ENCODE measurements at regions of chr17 and their contacts with region 1.

Region 1: GRCh38 chr17:42112552-42113176 is at the start of gene DHX58:
- DNase-seq: peak; percentile 71 to 88 (median 83)
- ATAC-seq: peak; percentile 86 to 87
- H3K4me3 ChIP-seq: peak within 1 kb of the TSS; percentile 49
- H3K27ac ChIP-seq: peak within 1 kb of the TSS; percentile 84
- H3K4me1 ChIP-seq: no peaks in the 10 kb centered on the region
- H3K27me3 ChIP-seq: no peaks in the 10 kb centered on the region
- total RNA-seq, gene DHX58: 5.4 to 8.0 (median 6.1) TPM

Region 2: GRCh38 chr17:41367426-41368075 is 745.1 kb before region 1 on chr17:
- intact Hi-C with region 1: no loop called
- DNase-seq: no peak
- ATAC-seq: no peak
- H3K4me3 ChIP-seq: no peak overlapping the region
- H3K27ac ChIP-seq: no peak overlapping the region
- H3K4me1 ChIP-seq: no peaks in the 10 kb centered on the region
- H3K27me3 ChIP-seq: no peaks in the 10 kb centered on the region

Region 3: DNA sequence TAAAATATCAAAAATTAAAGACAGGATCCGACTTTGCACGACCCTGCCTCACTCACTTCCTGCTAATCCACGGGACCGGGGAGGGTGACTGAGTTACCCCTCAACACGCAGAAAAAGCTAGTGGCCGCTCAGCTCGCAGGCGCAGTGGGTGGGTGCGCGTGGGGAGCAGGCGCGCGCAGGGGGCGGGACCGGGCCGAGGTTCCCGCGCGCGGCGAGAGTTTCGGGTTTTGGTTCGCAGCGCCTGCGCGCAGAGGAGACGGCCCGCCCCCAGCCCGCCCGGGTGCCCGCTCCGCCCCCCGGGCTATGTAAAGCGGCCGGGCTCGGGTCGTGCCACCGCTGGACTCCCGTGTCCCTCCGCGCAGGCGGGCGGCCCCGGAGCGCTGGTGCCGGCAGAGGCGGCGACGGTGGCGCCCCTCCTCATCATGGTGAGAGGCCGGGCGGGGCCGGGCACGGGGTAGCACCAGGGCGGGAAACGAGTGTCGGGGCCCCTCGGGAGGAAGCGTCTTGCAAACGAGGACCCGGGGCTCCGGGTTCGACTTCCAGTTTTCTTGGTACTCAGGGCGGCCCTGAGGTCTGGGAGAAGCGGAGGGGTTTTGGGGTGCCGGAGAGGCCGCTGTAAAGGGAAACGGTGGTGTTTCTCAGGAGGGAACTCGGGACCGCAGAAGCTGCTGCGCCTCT is 146.1 kb before region 1 on chr17 and contains the start of gene CNP:
- intact Hi-C with region 1: loop called (anchors 2 to 5 kb)
- DNase-seq: peak; percentile 93 to 98 (median 97)
- ATAC-seq: peak; percentile 95 to 96
- H3K4me3 ChIP-seq: peak within 1 kb of the TSS; percentile 90
- H3K27ac ChIP-seq: peak within 1 kb of the TSS; percentile 85
- H3K4me1 ChIP-seq: peaks cover 9% of the 10 kb centered on the region
- H3K27me3 ChIP-seq: no peaks in the 10 kb centered on the region
- total RNA-seq, gene CNP: 37.1 to 41.1 (median 39.2) TPM

Region 4: DNA sequence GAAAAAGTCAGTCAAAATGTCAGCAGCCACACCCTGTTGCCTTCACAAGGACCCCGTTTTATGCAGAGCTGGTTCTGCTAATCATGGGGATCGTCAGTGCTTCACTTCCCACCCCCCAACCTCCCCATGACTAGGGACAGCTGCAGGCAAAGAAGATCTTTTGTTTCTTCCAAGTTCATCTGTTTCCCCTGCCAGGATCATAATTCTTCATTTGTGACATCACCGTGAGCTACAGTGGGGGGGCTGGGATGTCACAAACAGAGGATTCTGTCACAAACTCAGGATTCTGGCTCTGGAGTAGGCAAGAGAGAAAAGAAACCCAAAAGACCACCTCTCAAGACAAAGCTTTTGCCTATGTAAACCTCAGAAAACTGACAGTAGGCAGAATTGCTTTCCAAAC is 120.1 kb before region 1 on chr17:
- intact Hi-C with region 1: no loop called
- DNase-seq: no peak
- ATAC-seq: no peak
- H3K4me3 ChIP-seq: no peak overlapping the region
- H3K27ac ChIP-seq: no peak overlapping the region
- H3K4me1 ChIP-seq: no peaks in the 10 kb centered on the region
- H3K27me3 ChIP-seq: no peaks in the 10 kb centered on the region

Region 5: DNA sequence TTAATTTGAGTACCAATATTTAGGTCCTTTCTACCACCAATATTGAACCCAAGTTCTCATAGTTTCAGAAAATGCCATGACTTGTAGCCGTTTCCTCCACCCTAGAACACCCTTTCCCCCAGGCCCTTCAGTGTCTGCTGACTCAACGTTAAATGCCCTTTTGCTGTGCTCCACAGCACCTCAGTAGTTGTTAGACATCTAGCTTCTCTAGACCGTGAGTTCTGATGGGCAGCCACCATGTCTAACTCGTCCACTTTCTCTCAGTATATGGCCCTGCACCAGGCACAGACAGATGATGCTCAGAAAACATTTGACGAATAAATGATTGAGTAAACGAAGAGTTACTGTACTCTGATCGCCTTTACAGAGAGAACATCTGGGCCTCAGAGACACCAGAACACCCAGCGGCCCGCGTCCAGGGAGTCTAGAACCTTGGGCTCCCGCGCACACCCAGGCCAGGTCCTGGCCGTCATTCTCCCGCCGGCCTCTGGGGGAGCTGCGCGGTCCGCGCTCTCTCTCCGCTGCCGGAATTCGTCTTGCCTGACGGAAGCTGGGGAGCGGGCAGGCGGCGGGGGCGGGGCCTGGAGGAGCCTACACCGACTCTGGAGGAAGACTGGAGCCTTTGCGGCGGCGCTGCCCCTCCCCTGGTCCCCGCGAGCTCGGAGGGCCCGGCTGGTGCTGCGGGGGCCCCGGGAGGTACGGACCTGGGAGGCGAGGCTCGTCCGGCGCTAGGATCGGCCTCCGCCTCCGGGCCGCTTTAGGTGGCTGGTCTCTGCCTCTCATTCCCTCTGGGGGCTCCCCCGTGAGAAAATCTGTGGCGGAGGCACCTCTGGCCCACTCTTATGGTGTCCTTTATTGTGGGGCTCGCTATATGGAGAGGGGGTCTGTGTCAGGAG is 92.9 kb before region 1 on chr17 and contains the start of gene NKIRAS2:
- intact Hi-C with region 1: loop called in 1 of 4 experiments (anchors 10 kb)
- DNase-seq: peak; percentile 96 to 98 (median 98)
- ATAC-seq: peak; percentile 80 to 85
- H3K4me3 ChIP-seq: peak within 1 kb of the TSS; percentile 83
- H3K27ac ChIP-seq: peak within 1 kb of the TSS; percentile 49
- H3K4me1 ChIP-seq: no peaks in the 10 kb centered on the region
- H3K27me3 ChIP-seq: no peaks in the 10 kb centered on the region
- total RNA-seq, gene NKIRAS2: 39.1 to 47.9 (median 40.4) TPM

Region 6: GRCh38 chr17:42027961-42028790 is 84.5 kb before region 1 on chr17:
- intact Hi-C with region 1: loop called (anchors 5 to 10 kb)
- DNase-seq: no peak
- ATAC-seq: no peak
- H3K4me3 ChIP-seq: no peak overlapping the region
- H3K27ac ChIP-seq: no peak overlapping the region
- H3K4me1 ChIP-seq: no peaks in the 10 kb centered on the region
- H3K27me3 ChIP-seq: no peaks in the 10 kb centered on the region

Region 7: GRCh38 chr17:42061646-42062487 is 50.8 kb before region 1 on chr17:
- intact Hi-C with region 1: loop called in 1 of 4 experiments (anchors 5 kb)
- DNase-seq: no peak
- ATAC-seq: no peak
- H3K4me3 ChIP-seq: no peak overlapping the region
- H3K27ac ChIP-seq: no peak overlapping the region
- H3K4me1 ChIP-seq: no peaks in the 10 kb centered on the region
- H3K27me3 ChIP-seq: no peaks in the 10 kb centered on the region

Region 8: DNA sequence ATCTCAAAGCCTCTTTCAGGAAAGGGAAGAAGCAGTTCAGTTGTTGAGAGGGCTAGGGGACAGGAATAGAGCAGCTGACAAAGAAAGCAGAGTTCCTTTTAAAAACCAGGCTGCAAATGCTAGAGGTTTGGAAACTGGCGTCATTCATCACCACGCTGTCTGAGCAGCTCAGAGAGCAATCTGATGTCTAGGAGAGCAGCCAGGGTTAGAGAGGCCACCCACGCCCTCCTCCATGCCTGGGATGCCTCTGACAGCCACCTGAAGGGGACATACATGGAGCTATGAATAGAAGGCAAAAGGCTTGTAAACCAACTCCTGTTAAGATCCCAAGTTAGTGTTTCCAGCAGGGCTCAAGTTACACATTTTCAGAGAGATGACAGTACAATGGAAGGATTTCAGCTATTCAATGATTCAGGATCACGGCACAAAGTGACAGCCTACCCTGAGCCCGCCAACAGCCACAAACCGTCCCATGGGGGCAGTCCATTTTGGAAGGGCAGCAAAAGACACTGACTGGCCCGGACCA is 29.8 kb after region 1 on chr17:
- intact Hi-C with region 1: no loop called
- DNase-seq: no peak
- ATAC-seq: peak; percentile 62 to 71
- H3K4me3 ChIP-seq: no peak overlapping the region
- H3K27ac ChIP-seq: peak overlapping the region; percentile 31
- H3K4me1 ChIP-seq: peaks cover 17% of the 10 kb centered on the region
- H3K27me3 ChIP-seq: no peaks in the 10 kb centered on the region

Region 9: DNA sequence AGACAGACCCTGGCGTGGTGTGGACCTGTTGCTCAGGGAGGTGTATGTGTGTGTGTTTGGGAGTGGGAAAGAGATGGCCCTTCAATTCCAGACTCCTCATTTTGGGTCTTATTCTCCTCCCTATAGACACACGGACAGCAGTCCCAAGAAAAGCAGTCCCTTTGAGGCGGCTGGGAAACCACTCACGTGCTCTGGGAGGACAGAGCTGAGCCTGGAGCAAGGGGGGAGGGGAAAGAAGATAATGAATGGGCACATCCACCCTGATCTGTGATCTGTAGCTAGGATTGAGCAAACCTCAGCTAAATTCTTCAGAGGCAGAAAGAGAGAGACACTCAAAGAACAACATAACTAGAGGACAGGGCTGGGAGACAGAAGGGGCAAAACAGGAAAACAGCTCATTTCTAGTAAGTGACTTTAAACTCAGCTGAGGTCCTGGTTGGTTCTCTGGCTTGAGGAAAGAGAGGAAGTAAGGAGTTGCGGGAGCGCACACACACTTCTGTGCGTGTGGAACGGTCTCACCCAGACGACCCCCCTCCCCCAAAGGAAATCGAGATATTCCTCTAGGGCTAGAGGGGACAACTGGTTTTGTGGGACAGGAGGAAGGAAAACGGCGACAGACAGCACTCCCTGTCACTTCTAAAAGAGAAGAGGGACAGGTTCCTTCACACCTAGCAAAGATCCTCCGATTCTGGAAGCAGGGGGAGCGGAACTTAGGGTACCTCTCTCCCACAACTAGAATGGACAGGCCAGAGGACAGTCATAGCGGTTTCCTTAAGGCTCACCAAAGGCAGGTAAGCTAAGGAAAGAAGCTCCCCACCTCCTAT is 41.5 kb after region 1 on chr17:
- intact Hi-C with region 1: no loop called
- DNase-seq: peak in 1 of 3 donors; percentile 38
- ATAC-seq: peak in 1 of 2 donors; percentile 2
- H3K4me3 ChIP-seq: peak overlapping the region; percentile 89
- H3K27ac ChIP-seq: peak overlapping the region; percentile 61
- H3K4me1 ChIP-seq: peaks cover 8% of the 10 kb centered on the region
- H3K27me3 ChIP-seq: no peaks in the 10 kb centered on the region

Region 10: DNA sequence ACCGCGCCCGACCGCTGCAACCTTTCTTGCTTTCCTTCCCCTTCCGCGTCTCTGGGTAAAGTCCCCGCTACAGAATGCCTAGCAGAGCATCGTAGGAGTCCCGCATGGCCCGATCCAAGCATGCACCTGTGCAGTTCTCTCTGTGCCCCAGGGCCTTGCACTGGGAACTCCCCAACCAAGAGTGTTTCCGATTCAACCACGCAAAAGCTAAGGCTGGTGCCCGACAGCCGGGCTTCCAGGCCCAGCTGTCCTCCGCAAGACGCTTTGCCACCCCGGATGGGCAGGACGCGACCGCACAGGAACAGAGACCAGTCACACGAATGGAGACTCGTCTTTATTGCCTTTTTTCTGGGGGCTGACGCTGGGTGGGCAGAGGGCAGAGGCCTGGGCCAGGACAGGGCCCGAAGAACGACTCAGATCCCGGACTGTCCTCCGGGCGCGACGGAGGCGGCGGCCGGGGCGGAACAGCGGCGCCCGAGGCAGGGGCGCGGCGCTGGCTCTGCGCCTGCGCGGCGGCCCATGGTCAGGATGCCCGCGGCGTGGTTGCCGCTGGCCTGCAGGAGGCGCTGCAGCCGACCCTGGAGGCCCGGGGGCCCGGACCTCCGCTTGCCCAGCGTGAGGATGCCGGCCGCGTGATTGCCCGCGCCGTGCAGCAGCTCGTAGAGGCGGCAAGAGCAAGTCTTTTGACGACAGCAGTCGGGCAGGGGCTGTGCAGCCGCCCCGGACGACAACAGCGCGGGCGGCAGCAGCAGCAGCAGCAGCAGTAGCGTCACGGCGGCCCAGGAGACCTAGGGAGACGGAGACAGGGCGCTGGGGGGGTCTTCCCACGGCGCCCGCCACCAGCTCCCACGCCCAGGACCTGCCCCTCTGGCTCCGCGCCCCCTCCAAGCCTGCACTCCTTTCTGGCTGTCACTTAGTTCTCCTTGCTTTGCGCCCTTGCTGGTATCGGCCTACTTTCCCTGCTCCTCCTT is 71.4 kb after region 1 on chr17:
- intact Hi-C with region 1: loop called in 1 of 4 experiments (anchors 5 kb)
- DNase-seq: peak; percentile 79 to 93 (median 93)
- ATAC-seq: peak; percentile 81 to 85
- H3K4me3 ChIP-seq: peak overlapping the region; percentile 50
- H3K27ac ChIP-seq: peak overlapping the region; percentile 61
- H3K4me1 ChIP-seq: no peaks in the 10 kb centered on the region
- H3K27me3 ChIP-seq: no peaks in the 10 kb centered on the region